ENCODE measurements at regions of chrX and their contacts with region 1.

Region 1: DNA sequence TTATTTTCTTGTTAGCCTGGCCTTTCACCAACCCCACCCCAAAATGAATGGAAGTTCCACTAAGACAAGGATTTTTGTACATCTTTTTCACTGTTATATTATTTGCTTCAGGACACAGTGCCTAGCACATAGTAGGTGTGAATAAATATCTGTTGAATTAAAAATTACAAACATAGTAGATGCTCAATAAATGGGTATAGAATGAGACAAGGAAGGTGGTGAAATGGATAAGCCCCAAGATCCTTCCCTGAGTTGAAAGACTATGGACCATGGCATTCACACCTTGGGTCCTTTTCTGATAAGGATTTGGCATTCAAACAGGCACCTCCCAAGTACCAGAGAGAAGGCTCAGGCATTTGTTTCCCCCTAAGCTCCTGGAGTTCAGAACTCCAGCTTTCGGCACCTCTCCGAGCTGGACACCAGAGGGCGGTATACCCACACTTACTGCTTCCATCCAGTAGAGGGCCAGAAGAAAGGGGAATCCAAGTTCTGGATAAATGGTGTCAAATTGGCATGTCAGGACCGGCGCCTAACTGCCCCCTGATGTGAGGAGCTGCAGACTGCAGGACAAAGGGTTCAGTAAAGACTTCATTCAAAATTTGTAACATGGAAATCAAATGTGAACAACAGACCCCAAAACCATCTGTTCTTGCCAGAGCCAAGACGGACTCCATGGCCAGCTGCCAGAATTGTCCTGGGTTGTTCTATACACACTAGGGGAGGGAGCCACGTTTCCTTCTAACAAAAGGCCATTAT is 193.0 kb downstream of the GPC3 start:
- DNase-seq: peak; percentile 54
- H3K4me3 ChIP-seq: no peak overlapping the region
- H3K27ac ChIP-seq: no peak overlapping the region
- H3K4me1 ChIP-seq: no peaks in the 10 kb centered on the region
- CTCF ChIP-seq: peak; percentile 91

Region 2: DNA sequence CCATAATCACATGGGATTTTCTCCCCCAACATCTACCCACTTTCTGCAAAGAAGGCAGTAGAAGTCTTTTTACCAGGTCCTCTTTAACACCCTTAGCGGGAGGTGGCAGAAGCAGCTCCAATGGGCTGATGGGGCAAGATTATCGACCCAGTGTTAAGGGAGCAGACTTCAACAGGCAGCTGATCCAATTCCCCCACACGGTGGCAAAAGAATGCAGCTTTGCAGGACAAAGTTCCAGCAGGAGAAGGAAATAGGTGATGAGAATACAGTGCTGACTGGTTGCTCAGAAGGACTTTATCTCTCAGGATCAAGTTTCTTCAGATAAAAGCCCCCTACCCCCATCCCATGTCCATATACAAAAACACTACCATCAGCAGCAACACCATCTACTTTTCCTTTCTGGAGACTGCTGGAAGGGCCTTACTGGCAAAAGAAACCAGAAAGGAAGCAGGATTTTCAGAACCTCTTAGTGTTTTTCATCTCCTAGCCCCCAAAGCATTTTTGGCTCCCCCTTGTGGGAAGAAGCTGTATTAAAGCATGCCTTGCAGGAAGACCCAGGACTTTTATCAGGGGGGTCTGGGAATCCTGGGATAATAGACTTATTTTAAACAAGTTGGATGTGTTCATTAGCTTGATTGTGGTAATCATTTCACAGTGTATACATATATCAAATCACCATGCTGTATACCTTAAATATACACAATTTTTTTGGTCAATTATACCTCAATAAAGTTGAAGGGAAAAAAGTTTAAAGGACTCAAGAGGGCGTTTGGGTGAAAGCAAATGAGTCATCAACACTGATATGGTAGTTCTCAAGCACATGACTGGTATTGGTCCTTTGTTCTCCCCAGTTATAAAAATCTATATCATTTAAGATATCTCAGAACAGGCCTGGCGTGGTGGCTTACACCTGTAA is 46.6 kb after region 1 on chrX:
- CTCF ChIA-PET with region 1: no interaction called
- POLR2A ChIA-PET with region 1: no interaction called
- intact Hi-C with region 1: loop called (anchors 2 kb)
- DNase-seq: peak; percentile 12
- H3K4me3 ChIP-seq: no peak overlapping the region
- H3K27ac ChIP-seq: no peak overlapping the region
- H3K4me1 ChIP-seq: no peaks in the 10 kb centered on the region
- CTCF ChIP-seq: peak; percentile 73

Measured in OCI-LY7 (cell line).